ENCODE measurements at regions of chrX and their contacts with region 1.

Region 1: DNA sequence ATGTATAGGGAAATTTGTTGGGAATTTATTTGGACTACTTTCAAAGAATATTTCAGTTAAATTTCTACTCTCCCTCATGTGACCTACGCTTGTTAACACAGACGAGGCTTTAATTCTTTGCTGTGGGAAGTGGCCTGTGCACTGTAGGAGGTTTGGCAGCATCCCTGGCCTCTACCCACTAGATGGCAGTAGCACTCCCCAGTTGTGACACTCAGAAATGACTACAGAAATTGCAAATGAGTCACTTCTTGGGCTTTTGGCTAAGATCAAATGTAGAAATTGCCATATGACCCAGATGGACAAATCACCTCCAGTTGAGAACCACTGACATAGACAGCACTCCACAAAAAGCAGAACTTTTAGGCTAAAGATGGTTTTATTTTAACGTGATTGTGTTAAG is 22.1 kb downstream of the PIR start:
- DNase-seq: peak; percentile 22
- H3K4me3 Mint-ChIP-seq: no peak overlapping the region
- H3K27ac Mint-ChIP-seq: no peak overlapping the region
- H3K4me1 Mint-ChIP-seq: peaks cover 6% of the 10 kb centered on the region
- H3K27me3 Mint-ChIP-seq: no peaks in the 10 kb centered on the region

Region 2: DNA sequence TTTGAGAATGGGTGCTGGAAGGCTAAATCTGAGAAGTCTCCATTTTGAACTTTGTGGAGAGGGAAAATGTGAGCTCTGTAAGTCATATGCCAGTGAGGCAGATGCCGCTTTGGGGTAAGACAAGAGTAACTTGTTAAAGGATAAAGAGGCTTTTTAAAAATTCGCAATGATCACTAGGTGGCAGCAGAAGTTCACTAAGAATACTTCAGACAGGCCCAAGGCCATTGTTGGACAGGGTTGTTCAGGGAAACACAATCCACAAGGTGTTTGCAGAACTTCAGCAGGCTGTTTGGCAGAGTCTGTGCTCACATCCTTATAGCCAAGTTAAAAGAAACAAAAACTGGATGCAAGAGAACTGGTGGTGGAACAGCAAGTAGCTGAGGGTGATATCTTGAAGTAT is 122.0 kb before region 1 on chrX:
- intact Hi-C with region 1: loop called (anchors 1 kb)
- DNase-seq: no peak
- H3K4me3 Mint-ChIP-seq: no peak overlapping the region
- H3K27ac Mint-ChIP-seq: no peak overlapping the region
- H3K4me1 Mint-ChIP-seq: no peaks in the 10 kb centered on the region
- H3K27me3 Mint-ChIP-seq: no peaks in the 10 kb centered on the region

Region 3: DNA sequence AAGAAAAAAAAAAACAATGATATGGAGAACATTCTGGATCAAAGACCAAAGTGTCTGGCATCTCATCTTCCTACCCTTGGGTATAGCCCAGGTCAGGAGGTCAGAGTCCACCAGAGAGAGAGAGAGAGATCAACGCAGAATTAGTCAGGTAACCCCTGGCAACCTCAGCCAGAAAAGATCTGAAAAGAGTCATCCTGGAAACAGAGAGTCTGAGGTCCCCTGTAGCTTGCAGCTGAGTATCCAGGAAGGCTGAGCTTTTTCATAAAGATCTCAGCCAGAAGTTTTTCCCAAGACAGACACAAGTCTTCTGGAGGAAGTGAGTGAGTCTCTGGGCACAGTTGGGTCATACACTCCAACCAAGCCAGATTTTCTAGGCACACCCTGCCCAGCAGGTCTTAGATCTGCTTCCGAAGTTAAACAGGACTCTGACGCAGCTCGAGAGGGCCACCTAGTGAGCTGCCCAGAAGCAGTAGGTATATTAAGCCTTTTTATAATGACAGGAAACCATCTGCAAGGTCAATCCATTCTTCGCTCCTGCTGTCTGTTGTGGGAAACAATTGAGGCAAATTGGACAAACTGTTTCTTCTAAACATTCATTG is 94.1 kb after region 1 on chrX:
- intact Hi-C with region 1: loop called (anchors 1 kb)
- DNase-seq: no peak
- H3K4me3 Mint-ChIP-seq: no peak overlapping the region
- H3K27ac Mint-ChIP-seq: no peak overlapping the region
- H3K4me1 Mint-ChIP-seq: no peaks in the 10 kb centered on the region
- H3K27me3 Mint-ChIP-seq: peaks cover 4% of the 10 kb centered on the region